Activated CD4-positive, alpha-beta T cell treated with anti-CD3 and anti-CD28 coated beads, Interleukin-2, amount 10 ng/mL, durations not matched to agents 24 days and 14 days (primary cell): ENCODE measurements at regions of chr20 and their contacts with region 1.

Region 1: GRCh38 chr20:46757754-46758678 is 48.6 kb downstream of the SLC2A10 start:
- DNase-seq: peak; percentile 89
- H3K4me3 Mint-ChIP-seq: no peak overlapping the region
- H3K27ac Mint-ChIP-seq: no peak overlapping the region
- H3K4me1 Mint-ChIP-seq: peaks cover 4% of the 10 kb centered on the region
- H3K27me3 Mint-ChIP-seq: peaks cover 5% of the 10 kb centered on the region

Region 2: DNA sequence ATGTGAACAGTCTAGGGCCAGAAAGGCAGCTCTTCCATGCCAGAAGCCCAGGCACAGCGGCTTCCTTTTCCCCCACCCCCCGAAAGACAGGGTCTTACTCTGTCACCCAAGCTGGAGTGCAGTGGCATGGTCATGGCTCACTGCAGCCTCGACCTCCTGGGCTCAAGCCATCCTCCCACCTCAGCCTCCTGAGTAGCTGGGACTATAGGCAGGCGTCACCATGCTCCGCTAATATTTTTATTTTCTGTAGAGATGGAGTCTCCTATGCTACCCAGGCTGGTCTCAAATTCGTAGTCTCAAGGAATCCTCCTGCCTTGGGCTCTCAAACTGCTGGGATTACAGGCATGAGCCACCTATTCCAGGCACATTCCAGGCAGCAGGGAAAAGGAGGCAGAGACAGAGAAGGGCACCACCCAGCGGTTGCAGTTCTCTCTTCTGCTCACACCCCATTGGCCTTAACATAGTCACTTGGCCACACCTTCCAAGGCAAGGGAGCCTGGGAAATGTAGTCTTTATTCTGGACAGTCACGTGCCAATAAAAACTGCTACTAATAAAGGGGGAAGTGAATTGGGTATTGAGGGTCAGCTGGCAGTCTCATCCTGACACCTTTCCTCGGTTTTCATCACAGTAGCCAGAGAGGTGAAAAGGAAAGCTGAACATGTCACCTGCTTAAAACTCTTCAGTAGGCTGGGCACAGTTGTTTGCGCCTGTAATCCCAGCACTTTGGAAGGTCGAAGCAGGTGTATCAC is 392.6 kb after region 1 on chr20:
- intact Hi-C with region 1: loop called (anchors 2 kb)
- DNase-seq: peak; percentile 73
- H3K4me3 Mint-ChIP-seq: no peak overlapping the region
- H3K27ac Mint-ChIP-seq: no peak overlapping the region
- H3K4me1 Mint-ChIP-seq: no peaks in the 10 kb centered on the region
- H3K27me3 Mint-ChIP-seq: peaks cover 3% of the 10 kb centered on the region